Posterior vena cava (tissue), 2 donors: ENCODE measurements at regions of chr3 and their contacts with region 1.

Region 1: GRCh38 chr3:132916096-132916495 is 122.1 kb upstream of the TMEM108 start:
- DNase-seq: no peak

Region 2: GRCh38 chr3:131314318-131314717 is 1601.8 kb before region 1 on chr3:
- intact Hi-C with region 1: no loop called
- DNase-seq: no peak

Region 3: DNA sequence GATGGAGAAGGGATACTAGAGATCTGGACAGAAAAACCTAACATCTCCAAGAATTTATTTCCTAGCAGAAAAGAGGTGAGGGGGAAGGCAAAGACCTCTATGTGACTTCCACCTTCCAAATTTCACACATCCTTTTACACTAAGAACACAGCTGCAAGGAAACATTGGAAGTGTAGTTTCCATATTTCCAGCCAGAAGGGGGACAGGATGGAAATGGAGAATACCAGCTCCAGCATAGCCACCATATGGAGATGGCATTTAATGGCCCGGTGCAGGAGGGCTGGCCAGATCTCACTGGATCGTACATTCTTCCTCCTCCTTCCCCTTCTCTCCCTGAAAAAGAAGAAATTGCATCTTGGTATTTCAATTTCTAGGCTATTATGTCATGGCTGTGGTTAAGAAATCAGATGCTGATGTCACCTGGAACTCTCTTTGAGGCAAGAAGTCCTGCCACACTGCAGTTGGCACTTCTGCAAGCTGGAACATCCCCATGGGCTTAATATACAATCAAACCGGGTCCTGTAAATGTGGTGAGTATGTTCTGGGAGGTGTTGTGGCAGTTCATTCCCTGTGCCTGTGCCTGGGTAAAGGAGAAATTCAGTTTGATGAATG is 793.1 kb after region 1 on chr3:
- intact Hi-C with region 1: loop called in 1 of 2 experiments (anchors 5 kb)
- DNase-seq: no peak